ENCODE measurements at regions of chr11 and their contacts with region 1.

Region 1: GRCh38 chr11:12888525-12889158 is 120.5 kb upstream of the RASSF10 start:
- DNase-seq: peak; percentile 85 to 90
- ATAC-seq: peak; percentile 75 to 91 (median 84)
- H3K4me3 ChIP-seq: no peak overlapping the region
- H3K27ac ChIP-seq: peak overlapping the region in 9 of 10 donors; percentile 48 to 83 (median 65)
- H3K4me1 ChIP-seq: peaks cover 10 to 50% (median 30%) of the 10 kb centered on the region in 9 donors
- H3K27me3 ChIP-seq: no peaks in the 10 kb centered on the region
- CTCF ChIP-seq: peak; percentile 63 to 87 (median 76)

Region 2: GRCh38 chr11:12411806-12412727 is 476.6 kb before region 1 on chr11:
- intact Hi-C with region 1: loop called in 9 of 10 experiments (anchors 2 to 10 kb)
- DNase-seq: peak; percentile 57 to 78
- ATAC-seq: peak; percentile 73 to 93 (median 85)
- H3K4me3 ChIP-seq: no peak overlapping the region
- H3K27ac ChIP-seq: peak overlapping the region in 4 of 10 donors; percentile 4 to 31 (median 10)
- H3K4me1 ChIP-seq: peaks cover 3 to 79% (median 53%) of the 10 kb centered on the region in 9 donors
- H3K27me3 ChIP-seq: no peaks in the 10 kb centered on the region
- CTCF ChIP-seq: peak; percentile 67 to 88 (median 80)

Region 3: GRCh38 chr11:12417728-12418611 is 470.7 kb before region 1 on chr11:
- intact Hi-C with region 1: loop called in 8 of 10 experiments (anchors 2 to 10 kb)
- DNase-seq: no peak
- ATAC-seq: peak in 7 of 8 donors; percentile 20 to 71 (median 49)
- H3K4me3 ChIP-seq: no peak overlapping the region
- H3K27ac ChIP-seq: peak overlapping the region in 2 of 10 donors; percentile 13 to 19
- H3K4me1 ChIP-seq: peaks cover 7 to 44% (median 21%) of the 10 kb centered on the region in 9 donors
- H3K27me3 ChIP-seq: no peaks in the 10 kb centered on the region
- CTCF ChIP-seq: no peak

Region 4: DNA sequence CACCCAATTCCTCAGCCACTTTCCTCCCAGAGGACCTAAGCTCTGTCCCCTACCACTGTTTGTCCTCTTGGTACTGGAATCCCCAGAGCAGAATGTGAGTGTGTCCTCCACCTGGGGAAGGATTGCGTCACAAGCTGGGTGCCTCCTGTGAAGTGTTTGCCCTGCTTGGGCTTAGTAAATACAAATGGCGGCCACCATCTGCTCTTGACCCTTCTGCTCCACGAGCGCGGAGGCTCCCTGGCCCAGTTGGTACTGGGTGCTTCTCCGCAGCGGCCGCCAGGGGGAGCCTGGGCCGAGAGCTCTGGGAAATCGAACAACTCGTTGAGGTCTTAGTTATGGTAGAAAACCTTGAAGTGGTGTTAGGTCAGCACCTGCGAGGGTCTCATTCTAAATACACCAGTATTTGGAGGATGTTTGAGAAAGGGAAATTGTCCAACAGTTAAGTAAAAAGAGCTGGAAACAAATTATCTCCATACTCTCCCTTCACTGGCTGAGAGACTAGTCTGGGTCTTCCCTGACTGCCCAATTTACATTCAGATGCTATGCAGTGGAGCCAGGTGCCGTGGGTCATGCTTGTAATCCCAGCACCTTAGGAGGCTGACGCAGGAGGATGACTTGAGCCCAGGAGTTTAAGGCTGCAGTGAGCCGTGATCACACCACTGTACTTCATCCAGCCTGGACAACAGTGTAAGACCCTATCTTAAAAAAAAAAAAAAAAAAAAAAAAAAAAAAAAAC is 289.1 kb before region 1 on chr11:
- intact Hi-C with region 1: loop called in 8 of 10 experiments (anchors 2 to 10 kb)
- DNase-seq: peak; percentile 22 to 57
- ATAC-seq: peak in 7 of 8 donors; percentile 41 to 72 (median 52)
- H3K4me3 ChIP-seq: no peak overlapping the region
- H3K27ac ChIP-seq: no peak overlapping the region
- H3K4me1 ChIP-seq: peaks cover 0 to 36% (median 13%) of the 10 kb centered on the region in 9 donors
- H3K27me3 ChIP-seq: no peaks in the 10 kb centered on the region
- CTCF ChIP-seq: peak; percentile 46 to 78 (median 68)

Region 5: GRCh38 chr11:12706545-12707499 is 181.8 kb before region 1 on chr11:
- intact Hi-C with region 1: no loop called
- DNase-seq: peak; percentile 30 to 48
- ATAC-seq: peak in 7 of 8 donors; percentile 27 to 59 (median 47)
- H3K4me3 ChIP-seq: no peak overlapping the region
- H3K27ac ChIP-seq: peak overlapping the region in 6 of 10 donors; percentile 9 to 52 (median 38)
- H3K4me1 ChIP-seq: peaks cover 13 to 58% (median 36%) of the 10 kb centered on the region in 9 donors
- H3K27me3 ChIP-seq: no peaks in the 10 kb centered on the region
- CTCF ChIP-seq: no peak

Region 6: GRCh38 chr11:12813371-12814225 is 75.0 kb before region 1 on chr11:
- intact Hi-C with region 1: loop called in 1 of 10 experiments (anchors 10 kb)
- DNase-seq: peak in 1 of 2 donors; percentile 24
- ATAC-seq: peak; percentile 12 to 50 (median 32)
- H3K4me3 ChIP-seq: no peak overlapping the region
- H3K27ac ChIP-seq: peak overlapping the region in 8 of 10 donors; percentile 10 to 78 (median 54)
- H3K4me1 ChIP-seq: peaks cover 15 to 77% (median 60%) of the 10 kb centered on the region in 9 donors
- H3K27me3 ChIP-seq: no peaks in the 10 kb centered on the region
- CTCF ChIP-seq: peak in 1 of 9 donors; percentile 13

Region 7: GRCh38 chr11:12827929-12828812 is 60.5 kb before region 1 on chr11:
- intact Hi-C with region 1: loop called in 3 of 10 experiments (anchors 5 to 10 kb)
- DNase-seq: peak in 1 of 2 donors; percentile 31
- ATAC-seq: peak; percentile 63 to 84 (median 80)
- H3K4me3 ChIP-seq: peak overlapping the region in 9 of 10 donors; percentile 19 to 58 (median 51)
- H3K27ac ChIP-seq: peak overlapping the region in 9 of 10 donors; percentile 36 to 80 (median 58)
- H3K4me1 ChIP-seq: peaks cover 3 to 63% (median 47%) of the 10 kb centered on the region in 9 donors
- H3K27me3 ChIP-seq: peaks cover 0 to 21% (median 0%) of the 10 kb centered on the region in 7 donors
- CTCF ChIP-seq: no peak

Region 8: DNA sequence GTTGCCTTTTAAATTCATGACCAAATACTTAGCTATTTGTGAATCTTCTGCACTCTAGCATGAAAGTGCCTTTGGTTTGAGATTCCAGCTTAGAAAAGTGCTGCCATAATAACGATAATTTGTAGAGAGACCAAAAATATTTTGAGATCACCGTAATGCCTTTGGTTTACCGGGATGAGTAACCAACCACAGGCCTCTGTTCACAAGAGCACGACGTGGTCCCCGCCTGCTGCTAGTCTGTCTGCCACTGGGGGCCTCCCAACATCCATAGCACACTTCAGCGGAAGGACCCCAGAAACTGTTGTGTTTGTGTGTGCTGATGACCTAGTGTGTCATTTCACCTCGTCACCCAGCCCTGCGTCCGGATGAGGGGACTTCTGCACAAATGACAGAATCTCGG is 53.5 kb after region 1 on chr11:
- intact Hi-C with region 1: no loop called
- DNase-seq: no peak
- ATAC-seq: no peak
- H3K4me3 ChIP-seq: no peak overlapping the region
- H3K27ac ChIP-seq: no peak overlapping the region
- H3K4me1 ChIP-seq: no peaks in the 10 kb centered on the region
- H3K27me3 ChIP-seq: no peaks in the 10 kb centered on the region
- CTCF ChIP-seq: no peak

Region 9: GRCh38 chr11:13297917-13298356 is 409.3 kb after region 1 on chr11:
- intact Hi-C with region 1: loop called in 1 of 10 experiments (anchors 5 kb)
- DNase-seq: no peak
- ATAC-seq: peak; percentile 9 to 58 (median 50)
- H3K4me3 ChIP-seq: no peak overlapping the region
- H3K27ac ChIP-seq: peak overlapping the region in 1 of 10 donors; percentile 37
- H3K4me1 ChIP-seq: peaks cover 8 to 62% (median 46%) of the 10 kb centered on the region in 9 donors
- H3K27me3 ChIP-seq: no peaks in the 10 kb centered on the region
- CTCF ChIP-seq: no peak

Measured in heart right ventricle (tissue), 16 donors.